Testis (tissue), 5 donors: ENCODE measurements at regions of chr15 and their contacts with region 1.

Region 1: DNA sequence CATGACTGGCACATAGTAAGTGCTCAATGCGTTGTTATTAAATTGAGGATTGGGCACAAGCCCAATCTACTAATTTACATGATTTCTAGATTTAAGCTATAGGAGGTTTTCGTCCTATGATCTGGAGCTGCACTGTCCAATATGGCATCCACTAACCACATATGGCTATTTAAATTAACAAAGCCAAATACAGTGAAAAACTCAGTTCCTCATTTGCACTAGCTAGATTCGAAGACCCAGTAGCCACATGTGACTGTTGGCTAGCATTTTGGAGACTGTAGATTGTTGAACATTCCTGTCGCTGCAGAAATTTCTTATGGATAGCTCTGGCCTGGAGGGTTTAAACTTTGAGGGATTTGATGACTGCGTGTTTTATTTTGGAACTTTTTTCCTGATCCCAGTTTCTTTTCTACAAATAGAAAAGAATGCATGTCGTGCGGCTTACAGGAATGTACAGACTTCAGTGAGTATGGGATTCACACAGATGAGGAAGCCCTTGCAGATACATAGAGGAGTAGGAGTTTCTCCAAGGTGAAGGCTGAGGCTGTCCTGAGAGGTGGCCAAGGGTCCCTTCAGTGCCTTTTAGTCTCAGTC is 82.8 kb downstream of the SLCO3A1 start:
- DNase-seq: no peak
- H3K4me3 ChIP-seq: no peak overlapping the region
- H3K27ac ChIP-seq: no peak overlapping the region
- H3K4me1 ChIP-seq: peaks cover 14% of the 10 kb centered on the region
- H3K27me3 ChIP-seq: no peaks in the 10 kb centered on the region
- CTCF ChIP-seq: no peak
- POLR2A ChIP-seq: no peak

Region 2: DNA sequence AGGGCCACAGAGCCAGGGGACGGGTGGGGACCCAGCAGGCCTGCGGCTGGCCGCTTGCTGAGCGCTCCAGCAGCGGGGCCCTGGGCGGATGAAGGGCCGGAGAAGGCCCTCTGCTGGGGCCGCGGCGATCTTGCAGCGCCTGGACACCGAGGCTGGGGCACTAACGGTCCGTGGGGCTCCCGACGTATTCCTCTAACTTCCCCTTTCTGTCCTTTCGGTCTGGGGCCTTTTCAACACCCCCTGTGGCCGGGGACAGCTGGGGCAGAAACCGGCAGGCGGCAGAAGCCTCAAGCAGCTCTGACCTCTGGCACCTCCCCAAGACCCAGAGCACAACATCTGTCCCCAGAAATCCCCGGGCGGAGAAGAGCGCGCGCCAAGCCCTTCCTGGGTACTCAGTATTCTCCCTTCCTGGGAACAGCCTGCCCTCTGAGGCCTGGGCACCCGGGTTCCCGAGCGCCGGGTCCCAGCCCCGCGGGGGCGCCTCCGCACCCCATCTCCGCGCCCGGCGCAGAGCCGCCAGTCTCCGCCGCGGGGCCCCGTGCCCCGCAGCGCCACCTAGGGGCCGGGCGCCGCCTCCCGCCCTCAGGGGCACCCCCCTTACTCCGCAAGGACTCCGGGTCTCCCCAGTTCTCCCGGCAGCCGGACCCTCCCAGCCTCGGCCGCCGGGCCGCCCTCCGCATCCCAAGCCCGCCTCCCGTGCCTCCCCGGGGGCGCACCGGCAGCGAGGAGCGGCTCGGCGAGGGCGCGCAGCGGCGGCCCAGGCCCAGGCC is 83.4 kb before region 1 on chr15:
- intact Hi-C with region 1: loop called (anchors 10 kb)
- DNase-seq: peak; percentile 78
- H3K4me3 ChIP-seq: peak overlapping the region; percentile 67 to 86
- H3K27ac ChIP-seq: peak overlapping the region; percentile 90 to 95
- H3K4me1 ChIP-seq: peaks cover 20% of the 10 kb centered on the region
- H3K27me3 ChIP-seq: no peaks in the 10 kb centered on the region
- CTCF ChIP-seq: peak; percentile 82 to 84 (median 83)
- POLR2A ChIP-seq: no peak